Calu3 (cell line): ENCODE measurements at regions of chr3 and their contacts with region 1.

Region 1: GRCh38 chr3:29775340-29775739 is 494.5 kb downstream of the RBMS3 start:
- DNase-seq: no peak
- H3K4me3 Mint-ChIP-seq: no peak overlapping the region
- H3K27ac Mint-ChIP-seq: no peak overlapping the region
- H3K4me1 Mint-ChIP-seq: no peaks in the 10 kb centered on the region
- H3K27me3 Mint-ChIP-seq: no peaks in the 10 kb centered on the region
- CTCF ChIP-seq: no peak

Region 2: GRCh38 chr3:29741231-29741630 is 34.1 kb before region 1 on chr3:
- CTCF ChIA-PET with region 1: no interaction called
- intact Hi-C with region 1: no loop called
- DNase-seq: no peak
- H3K4me3 Mint-ChIP-seq: no peak overlapping the region
- H3K27ac Mint-ChIP-seq: no peak overlapping the region
- H3K4me1 Mint-ChIP-seq: peaks cover 2% of the 10 kb centered on the region
- H3K27me3 Mint-ChIP-seq: no peaks in the 10 kb centered on the region
- CTCF ChIP-seq: no peak

Region 3: DNA sequence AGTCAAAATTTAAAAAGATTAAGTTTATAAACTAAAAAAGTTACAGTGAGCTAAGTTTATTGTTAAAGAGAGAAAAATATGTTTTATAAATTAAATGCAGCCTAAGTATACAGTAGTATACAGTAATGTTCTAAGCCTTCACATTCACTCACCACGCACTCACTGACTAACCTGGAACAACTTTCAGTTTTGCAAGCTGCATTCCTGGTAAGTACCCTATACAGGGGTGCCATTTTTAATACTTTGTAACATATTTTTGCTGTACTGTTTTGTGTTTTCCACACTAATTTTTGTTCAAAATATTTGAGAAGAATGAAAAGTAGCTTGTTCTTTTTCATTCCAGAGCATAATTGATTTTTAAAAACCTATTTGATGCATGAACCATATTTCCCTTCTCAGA is 30.4 kb after region 1 on chr3:
- CTCF ChIA-PET with region 1: no interaction called
- intact Hi-C with region 1: no loop called
- DNase-seq: no peak
- H3K4me3 Mint-ChIP-seq: no peak overlapping the region
- H3K27ac Mint-ChIP-seq: no peak overlapping the region
- H3K4me1 Mint-ChIP-seq: no peaks in the 10 kb centered on the region
- H3K27me3 Mint-ChIP-seq: no peaks in the 10 kb centered on the region
- CTCF ChIP-seq: no peak

Region 4: GRCh38 chr3:29822071-29822470 is 46.7 kb after region 1 on chr3:
- CTCF ChIA-PET with region 1: no interaction called
- intact Hi-C with region 1: loop called (anchors 1 kb)
- DNase-seq: no peak
- H3K4me3 Mint-ChIP-seq: no peak overlapping the region
- H3K27ac Mint-ChIP-seq: no peak overlapping the region
- H3K4me1 Mint-ChIP-seq: no peaks in the 10 kb centered on the region
- H3K27me3 Mint-ChIP-seq: no peaks in the 10 kb centered on the region
- CTCF ChIP-seq: no peak

Region 5: DNA sequence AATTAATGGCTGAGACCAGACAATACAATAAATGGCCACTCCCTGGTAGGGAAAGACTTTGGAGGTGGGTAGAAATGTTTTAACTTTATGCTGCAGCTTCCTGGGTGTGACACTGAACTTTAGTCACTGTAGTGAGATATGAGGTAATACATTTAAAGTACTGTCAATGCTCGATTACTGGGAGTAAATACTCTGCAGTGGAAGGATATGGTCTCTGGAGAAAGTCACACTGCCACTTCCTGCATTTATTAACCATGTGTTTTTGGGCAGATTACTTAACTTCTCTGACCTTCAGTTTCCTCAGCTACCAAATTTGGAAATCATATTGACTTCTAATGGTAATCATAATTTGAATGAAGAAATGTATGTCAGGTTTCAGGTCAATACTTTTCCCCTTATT is 514.0 kb after region 1 on chr3:
- CTCF ChIA-PET with region 1: no interaction called
- intact Hi-C with region 1: no loop called
- DNase-seq: no peak
- H3K4me3 Mint-ChIP-seq: no peak overlapping the region
- H3K27ac Mint-ChIP-seq: no peak overlapping the region
- H3K4me1 Mint-ChIP-seq: peaks cover 69% of the 10 kb centered on the region
- H3K27me3 Mint-ChIP-seq: no peaks in the 10 kb centered on the region
- CTCF ChIP-seq: no peak